ENCODE measurements at regions of chr3 and their contacts with region 1.

Region 1: DNA sequence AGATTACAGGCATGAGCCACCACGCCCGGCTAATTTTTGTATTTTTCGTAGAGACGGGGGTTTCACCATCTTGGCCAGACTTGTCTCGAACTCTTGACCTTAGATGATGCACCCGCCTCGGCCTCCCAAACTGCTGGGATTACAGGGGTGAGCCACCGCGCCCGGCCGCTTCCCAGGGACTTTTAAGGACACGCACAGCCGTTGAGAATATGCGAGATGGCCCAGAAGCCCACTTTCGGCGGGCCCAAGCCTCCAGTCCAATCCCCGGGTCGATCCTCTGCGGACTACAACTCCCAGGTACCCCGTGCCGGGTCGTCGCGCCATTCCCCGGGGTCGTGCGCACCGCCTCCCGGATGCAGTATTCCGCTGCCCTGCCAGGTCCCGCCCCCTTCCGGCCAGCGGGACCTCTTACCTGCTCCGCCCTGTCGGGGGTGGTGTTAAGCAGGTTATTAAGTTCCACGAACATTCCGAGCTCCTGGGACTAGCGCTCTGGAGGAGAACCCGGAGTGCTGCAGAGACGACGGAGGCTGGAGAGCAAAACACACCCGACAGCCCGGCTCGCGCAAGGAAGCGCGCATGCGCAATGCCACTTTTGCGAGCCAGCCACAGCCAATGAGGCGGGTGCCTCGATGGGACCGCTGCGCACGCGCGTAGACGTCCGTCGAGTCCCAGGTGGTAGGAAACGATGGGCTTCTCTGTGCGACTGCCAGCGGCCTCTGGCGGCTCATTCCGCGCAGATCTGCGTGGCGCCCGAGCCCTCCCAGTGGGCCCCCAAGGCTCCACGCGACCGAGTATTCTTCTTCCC is at the start of gene ELP6:
- DNase-seq: peak; percentile 95
- H3K4me3 Mint-ChIP-seq: peak within 1 kb of the TSS; percentile 97
- H3K27ac Mint-ChIP-seq: peak within 1 kb of the TSS; percentile 98
- H3K4me1 Mint-ChIP-seq: peaks cover 18% of the 10 kb centered on the region
- H3K27me3 Mint-ChIP-seq: no peaks in the 10 kb centered on the region
- total RNA-seq, gene ELP6: 44.7 and 47.9 TPM in 2 replicates

Region 2: GRCh38 chr3:47380601-47381316 is 132.6 kb before region 1 on chr3 and contains the start of gene PTPN23:
- intact Hi-C with region 1: loop called (anchors 1 kb)
- DNase-seq: peak; percentile 99
- H3K4me3 Mint-ChIP-seq: peak within 1 kb of the TSS; percentile 100
- H3K27ac Mint-ChIP-seq: peak within 1 kb of the TSS; percentile 100
- H3K4me1 Mint-ChIP-seq: peaks cover 43% of the 10 kb centered on the region
- H3K27me3 Mint-ChIP-seq: no peaks in the 10 kb centered on the region
- total RNA-seq, gene PTPN23: 33.7 and 35.1 TPM in 2 replicates

Region 3: GRCh38 chr3:47420511-47421484 is 92.5 kb before region 1 on chr3:
- intact Hi-C with region 1: loop called (anchors 1 kb)
- DNase-seq: peak; percentile 83
- H3K4me3 Mint-ChIP-seq: peak overlapping the region; percentile 43
- H3K27ac Mint-ChIP-seq: peak overlapping the region; percentile 98
- H3K4me1 Mint-ChIP-seq: peaks cover 22% of the 10 kb centered on the region
- H3K27me3 Mint-ChIP-seq: no peaks in the 10 kb centered on the region

Region 4: DNA sequence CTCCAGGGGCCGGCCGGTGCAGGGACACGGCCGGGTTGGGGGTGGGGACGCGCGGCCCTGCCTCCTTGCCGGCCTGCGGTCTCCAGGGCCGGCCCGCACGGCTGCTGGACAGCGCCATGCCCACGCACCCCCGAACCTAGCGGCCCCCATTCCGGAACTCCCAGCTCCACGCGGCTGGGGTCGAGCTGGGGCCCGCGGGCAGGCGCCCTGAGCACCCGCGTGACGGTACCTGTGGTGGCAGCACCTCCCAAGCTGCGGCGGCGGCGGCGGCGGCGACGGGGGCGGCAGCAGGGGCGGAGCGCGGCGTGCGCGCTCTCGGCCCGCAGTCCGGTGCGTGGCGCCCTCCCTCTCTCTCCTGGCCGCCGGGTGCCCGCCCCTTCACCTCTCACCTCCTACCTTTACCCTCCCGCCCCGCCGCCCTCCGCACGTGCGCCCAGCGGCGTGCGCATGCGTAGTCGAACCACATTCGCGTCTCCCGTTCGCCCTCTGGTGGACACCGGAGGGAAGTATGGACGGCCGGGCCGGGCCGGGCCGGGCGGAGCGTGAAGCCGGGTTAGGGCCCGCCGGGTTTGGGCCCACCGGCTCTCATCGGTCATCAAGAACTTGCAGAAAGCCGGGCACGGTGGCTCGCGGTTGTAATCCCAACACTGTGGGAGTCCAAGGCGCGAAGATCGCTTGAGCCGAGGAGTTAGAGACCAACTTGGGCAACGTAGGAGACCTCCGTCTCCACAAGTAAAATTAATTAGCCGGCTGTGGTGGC is 37.6 kb before region 1 on chr3 and contains the start of gene SCAP:
- intact Hi-C with region 1: loop called (anchors 1 kb)
- DNase-seq: peak; percentile 95
- H3K4me3 Mint-ChIP-seq: peak within 1 kb of the TSS; percentile 92
- H3K27ac Mint-ChIP-seq: peak within 1 kb of the TSS; percentile 93
- H3K4me1 Mint-ChIP-seq: peaks cover 26% of the 10 kb centered on the region
- H3K27me3 Mint-ChIP-seq: no peaks in the 10 kb centered on the region
- total RNA-seq, gene SCAP: 86.3 and 91.2 TPM in 2 replicates

Region 5: DNA sequence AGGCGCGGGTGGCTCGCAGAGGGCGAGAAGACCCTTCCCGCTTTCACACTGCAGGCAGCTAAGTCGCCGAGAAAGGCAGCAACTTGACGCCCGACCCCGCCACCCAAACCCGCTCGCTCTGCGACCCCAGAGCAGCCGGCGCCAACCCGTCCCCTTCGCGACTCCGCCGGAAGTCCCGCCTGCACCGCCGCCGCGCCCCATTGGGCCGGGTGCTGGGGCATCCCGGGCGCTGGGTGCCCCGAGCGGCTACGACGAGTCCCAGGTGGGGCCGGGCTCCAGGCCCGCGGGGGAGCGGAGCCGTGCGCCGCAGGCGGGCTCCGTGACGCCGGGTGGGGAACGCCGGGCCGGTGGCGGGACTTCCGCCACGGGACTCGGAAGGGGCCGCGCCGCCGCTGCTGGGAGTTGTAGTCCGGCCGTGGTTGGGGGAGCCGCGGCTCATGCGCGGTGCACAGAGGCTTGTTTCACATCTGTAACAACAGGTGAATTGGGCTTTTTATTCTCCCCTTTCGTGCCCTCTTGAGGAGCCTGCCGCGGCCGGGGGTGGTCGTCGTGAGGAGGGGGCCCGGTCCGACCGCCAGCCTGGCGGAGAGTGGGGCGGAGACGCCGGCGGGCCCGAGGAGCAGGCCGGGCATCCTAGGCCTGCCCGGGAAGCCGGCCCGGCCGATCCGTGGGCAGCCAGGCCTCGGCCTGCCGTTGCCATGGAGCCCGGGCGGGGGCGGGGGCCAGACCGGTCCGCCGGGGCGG is 289.6 kb after region 1 on chr3 and contains the start of gene DHX30:
- intact Hi-C with region 1: loop called (anchors 1 kb)
- DNase-seq: peak; percentile 82
- H3K4me3 Mint-ChIP-seq: peak within 1 kb of the TSS; percentile 93
- H3K27ac Mint-ChIP-seq: peak within 1 kb of the TSS; percentile 95
- H3K4me1 Mint-ChIP-seq: peaks cover 19% of the 10 kb centered on the region
- H3K27me3 Mint-ChIP-seq: no peaks in the 10 kb centered on the region
- total RNA-seq, gene DHX30: 149 and 154 TPM in 2 replicates

Region 6: DNA sequence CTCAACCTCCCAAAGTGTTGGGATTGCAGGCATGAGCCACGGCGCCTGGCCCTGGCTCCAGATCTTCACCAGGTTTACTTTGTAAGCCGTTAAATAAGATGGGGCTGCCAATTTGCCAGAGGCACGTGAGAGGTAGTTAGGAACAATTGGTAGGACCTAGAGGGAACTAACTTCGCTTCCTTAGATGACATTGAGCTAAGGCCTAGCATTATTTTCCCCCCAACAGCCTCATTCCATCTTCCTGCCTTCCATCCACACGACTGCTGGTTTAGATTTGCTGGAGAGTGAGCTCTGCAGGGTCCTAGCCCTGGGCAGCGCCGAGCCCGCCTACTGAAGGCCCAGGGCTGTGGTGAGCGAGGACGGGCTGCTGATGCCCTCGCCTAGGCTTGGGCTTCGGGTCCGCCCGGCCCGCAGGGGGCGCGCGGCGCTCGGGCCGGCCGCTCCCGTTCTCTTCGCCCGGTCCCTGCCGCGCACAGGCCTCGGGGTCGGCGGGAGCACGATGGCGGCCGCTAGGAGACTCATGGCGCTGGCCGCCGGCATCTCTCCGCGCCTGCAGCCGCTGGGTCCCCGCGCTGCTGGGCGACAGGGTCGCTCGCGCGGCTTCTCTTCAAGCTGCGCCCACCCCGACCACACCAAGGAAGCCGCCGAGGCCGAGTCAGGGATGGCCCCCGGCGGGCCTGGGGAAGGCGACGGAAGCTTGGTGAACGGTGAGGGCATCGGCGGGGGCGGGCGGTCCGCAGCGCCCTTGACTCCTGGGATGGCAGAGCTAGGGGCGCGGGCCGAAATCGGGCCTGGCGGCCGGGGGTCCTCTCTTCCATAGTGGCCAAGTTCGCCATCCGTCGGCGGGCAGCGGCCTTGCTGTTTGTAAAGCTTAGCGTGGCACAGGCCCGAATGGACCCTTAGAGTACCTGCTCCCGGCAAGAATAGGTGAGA is 311.5 kb after region 1 on chr3:
- intact Hi-C with region 1: no loop called
- DNase-seq: peak; percentile 77
- H3K4me3 Mint-ChIP-seq: peak overlapping the region; percentile 95
- H3K27ac Mint-ChIP-seq: peak overlapping the region; percentile 83
- H3K4me1 Mint-ChIP-seq: peaks cover 34% of the 10 kb centered on the region
- H3K27me3 Mint-ChIP-seq: no peaks in the 10 kb centered on the region

Region 7: DNA sequence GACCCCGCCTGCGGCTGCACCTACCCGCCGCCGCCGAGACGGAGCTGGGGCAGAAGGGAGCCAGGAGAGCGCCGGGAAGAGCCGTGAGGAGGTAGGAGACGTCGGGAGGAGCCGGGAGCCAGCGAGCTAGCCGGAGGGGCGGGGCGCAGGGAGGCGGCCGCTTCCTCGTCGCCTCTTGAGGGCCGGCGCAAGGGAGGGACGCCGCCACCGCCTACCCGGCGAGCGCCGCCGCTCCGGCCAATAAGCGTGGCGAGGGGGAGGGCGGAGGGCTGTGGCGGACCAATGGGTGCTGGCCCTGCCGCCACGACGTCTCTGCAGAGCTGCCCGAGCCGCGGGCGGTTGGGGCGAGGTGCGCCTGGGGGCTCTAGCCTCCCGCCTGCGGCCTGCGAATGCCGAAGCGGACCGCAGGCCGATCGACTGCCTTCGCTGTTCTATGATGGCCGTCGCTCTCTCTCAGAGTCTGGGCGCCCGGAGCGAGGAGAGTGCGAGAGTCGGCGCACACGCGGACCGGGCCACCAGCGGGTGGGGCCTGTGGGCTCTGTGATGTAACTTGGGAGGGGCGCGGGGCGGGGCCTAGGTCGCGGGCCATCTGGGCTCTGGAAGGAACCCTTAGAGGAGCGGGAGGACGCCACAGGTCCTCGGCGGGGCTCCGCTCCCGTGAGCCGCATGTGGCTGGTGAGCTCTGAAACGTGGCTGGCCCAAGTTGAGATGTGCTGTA is 575.6 kb after region 1 on chr3:
- intact Hi-C with region 1: loop called (anchors 5 kb)
- DNase-seq: peak; percentile 94
- H3K4me3 Mint-ChIP-seq: peak overlapping the region; percentile 97
- H3K27ac Mint-ChIP-seq: peak overlapping the region; percentile 99
- H3K4me1 Mint-ChIP-seq: peaks cover 35% of the 10 kb centered on the region
- H3K27me3 Mint-ChIP-seq: peaks cover 7% of the 10 kb centered on the region

Region 8: DNA sequence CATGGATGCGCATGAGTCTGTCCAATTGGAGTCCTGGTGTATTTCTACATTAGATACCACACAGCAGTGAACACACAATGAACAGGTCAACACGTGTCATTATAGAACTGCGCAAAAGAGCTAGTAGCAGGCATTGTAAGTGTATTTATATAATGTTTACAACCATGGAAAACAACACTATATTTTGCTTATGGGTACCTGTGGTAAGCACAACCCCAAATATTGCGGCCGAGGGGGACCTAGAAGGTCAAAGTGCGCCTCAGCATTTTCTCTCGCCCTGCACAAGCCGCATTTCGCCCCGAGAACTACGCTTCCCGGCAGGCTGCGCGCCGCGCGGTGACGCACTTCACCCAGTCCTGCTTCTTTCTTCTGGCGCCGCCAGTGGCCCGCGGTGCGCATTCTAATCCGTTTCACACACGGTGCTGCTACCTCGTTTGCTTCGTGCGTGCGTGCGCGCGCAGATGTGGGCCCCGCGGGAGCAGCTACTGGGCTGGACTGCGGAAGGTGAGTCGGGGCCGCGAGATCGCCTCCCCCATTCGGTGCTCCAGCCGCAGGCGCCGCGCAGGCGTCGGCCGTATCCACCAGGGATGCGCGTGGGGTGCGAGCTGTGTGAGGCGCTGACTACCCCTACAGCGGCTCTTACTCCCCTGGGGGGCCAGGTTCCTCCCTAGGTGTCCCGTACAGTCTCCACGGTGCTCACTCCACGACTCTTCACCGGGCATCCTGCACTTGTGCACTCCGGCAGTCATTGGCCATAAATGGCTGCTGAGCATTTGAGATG is 727.6 kb after region 1 on chr3 and contains the start of gene ZNF589:
- intact Hi-C with region 1: loop called (anchors 2 kb)
- DNase-seq: peak; percentile 93
- H3K4me3 Mint-ChIP-seq: peak within 1 kb of the TSS; percentile 91
- H3K27ac Mint-ChIP-seq: peak within 1 kb of the TSS; percentile 95
- H3K4me1 Mint-ChIP-seq: peaks cover 19% of the 10 kb centered on the region
- H3K27me3 Mint-ChIP-seq: no peaks in the 10 kb centered on the region
- total RNA-seq, gene ZNF589: 33.0 and 34.2 TPM in 2 replicates